PC-3 (cell line): ENCODE measurements at regions of chrX and their contacts with region 1.

Region 1: DNA sequence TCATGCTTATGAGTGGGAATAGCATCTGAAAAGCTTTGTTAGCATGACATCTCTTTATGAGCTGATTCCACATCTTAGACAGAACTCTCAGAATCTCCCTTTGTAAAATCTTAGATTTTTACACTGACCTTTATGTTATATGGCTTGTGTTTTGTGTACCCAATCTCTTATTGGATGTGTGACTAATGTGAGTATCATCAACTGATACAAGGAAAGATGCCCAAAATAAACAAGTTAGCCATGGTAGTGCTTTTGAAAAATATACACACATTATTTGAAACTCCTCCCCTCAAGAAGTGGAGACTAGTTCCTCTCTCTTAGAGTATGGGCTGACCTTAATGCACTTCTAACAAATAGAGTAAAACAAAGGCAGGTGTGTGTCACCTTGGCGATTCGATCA is 160.1 kb upstream of the NRK start:
- DNase-seq: peak; percentile 75
- ATAC-seq: peak; percentile 94
- H3K4me3 ChIP-seq: no peak overlapping the region; the same call in 1 of the 2 replicates
- H3K27ac ChIP-seq: peak overlapping the region; percentile 77
- H3K4me1 ChIP-seq: peaks cover 13% of the 10 kb centered on the region
- H3K27me3 ChIP-seq: no peaks in the 10 kb centered on the region
- CTCF ChIP-seq: no peak

Region 2: DNA sequence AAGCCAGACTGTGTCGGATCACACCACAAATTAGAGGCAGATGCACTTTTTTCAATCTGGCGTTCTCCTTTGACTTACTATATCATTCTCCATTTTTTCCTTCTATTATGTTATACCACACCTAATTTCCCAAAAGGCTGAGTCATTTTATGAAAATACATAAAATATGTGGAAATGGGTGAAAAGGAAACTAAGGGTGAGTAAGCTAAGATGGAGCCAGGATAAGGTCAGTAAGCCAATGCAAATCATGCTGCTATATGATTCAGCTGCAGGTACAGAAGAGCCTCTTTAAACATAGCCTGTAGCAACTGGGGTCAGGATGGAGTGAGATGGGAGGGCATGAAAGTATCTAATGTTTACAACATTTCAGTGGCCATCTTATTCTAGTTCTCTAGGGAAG is 347.8 kb before region 1 on chrX:
- CTCF ChIA-PET with region 1: no interaction called
- POLR2A ChIA-PET with region 1: no interaction called
- intact Hi-C with region 1: loop called (anchors 1 kb)
- DNase-seq: peak; percentile 91
- ATAC-seq: peak; percentile 92
- H3K4me3 ChIP-seq: peak overlapping the region; percentile 61
- H3K27ac ChIP-seq: peak overlapping the region; percentile 95
- H3K4me1 ChIP-seq: peaks cover 36% of the 10 kb centered on the region
- H3K27me3 ChIP-seq: no peaks in the 10 kb centered on the region
- CTCF ChIP-seq: no peak

Region 3: DNA sequence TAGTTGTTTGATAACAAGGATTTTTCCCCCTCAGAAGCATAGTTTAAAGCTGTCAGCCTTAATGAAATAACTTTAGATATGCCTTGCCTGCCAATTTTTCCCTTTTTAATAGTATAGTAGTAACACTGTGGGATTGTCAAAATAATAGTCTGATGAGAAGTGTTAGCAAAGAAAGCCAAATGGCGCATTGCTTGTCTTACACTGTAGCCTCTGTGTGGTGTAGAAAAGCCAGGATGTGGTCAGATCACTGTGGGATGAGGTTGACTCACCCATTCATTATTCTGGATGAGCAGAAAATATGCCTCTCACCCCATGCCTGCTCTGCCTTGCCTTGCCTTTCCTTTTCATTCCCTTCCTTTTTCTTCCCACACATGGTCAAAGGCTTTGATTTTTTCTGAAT is 97.7 kb before region 1 on chrX:
- CTCF ChIA-PET with region 1: no interaction called
- POLR2A ChIA-PET with region 1: no interaction called
- intact Hi-C with region 1: loop called (anchors 10 kb)
- DNase-seq: peak; percentile 84
- ATAC-seq: peak; percentile 99
- H3K4me3 ChIP-seq: no peak overlapping the region
- H3K27ac ChIP-seq: peak overlapping the region; percentile 77
- H3K4me1 ChIP-seq: peaks cover 15% of the 10 kb centered on the region
- H3K27me3 ChIP-seq: no peaks in the 10 kb centered on the region
- CTCF ChIP-seq: no peak

Region 4: DNA sequence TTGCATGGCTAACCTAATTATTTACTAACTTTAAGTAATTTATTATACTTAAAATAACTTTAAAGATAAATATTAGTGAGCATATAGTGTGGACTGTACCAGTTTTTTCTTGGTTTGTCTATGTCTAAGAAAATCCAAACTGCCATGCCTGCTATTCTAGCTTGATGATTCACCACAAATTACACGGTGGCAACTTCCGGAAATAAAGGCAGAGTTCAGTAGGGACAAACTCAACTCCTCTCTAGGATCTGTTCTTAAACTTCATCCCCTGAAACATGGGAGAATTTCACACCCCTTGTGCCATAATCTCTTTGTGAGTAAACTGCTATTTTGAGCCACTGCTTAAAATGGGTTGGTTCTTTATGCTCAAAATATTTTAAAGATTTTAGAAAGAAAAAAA is 53.5 kb before region 1 on chrX:
- CTCF ChIA-PET with region 1: no interaction called
- POLR2A ChIA-PET with region 1: no interaction called
- intact Hi-C with region 1: loop called (anchors 1 kb)
- DNase-seq: peak; percentile 48
- ATAC-seq: no peak
- H3K4me3 ChIP-seq: no peak overlapping the region
- H3K27ac ChIP-seq: no peak overlapping the region
- H3K4me1 ChIP-seq: peaks cover 23% of the 10 kb centered on the region
- H3K27me3 ChIP-seq: no peaks in the 10 kb centered on the region
- CTCF ChIP-seq: no peak

Region 5: DNA sequence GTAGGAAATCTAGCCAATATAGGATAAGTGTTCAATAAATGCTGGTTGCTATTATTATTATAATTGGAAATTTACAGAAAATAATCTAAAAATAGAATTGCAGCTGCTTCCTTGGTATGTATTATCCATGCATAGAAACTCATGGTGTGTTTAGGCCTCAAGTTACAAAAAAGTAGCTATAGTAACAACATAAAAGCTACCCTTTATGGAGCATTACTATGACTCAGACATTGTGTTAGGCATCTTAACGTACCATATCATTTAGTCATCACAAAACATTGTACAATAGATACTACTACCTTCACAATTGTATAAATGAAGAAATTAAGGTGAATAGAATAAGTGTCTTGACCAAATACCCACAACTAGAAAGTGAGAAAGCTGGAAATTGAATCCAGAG is 33.2 kb after region 1 on chrX:
- CTCF ChIA-PET with region 1: interaction called, 4 read pairs
- POLR2A ChIA-PET with region 1: no interaction called
- intact Hi-C with region 1: loop called (anchors 1 kb)
- DNase-seq: peak; percentile 84
- ATAC-seq: peak; percentile 96
- H3K4me3 ChIP-seq: no peak overlapping the region
- H3K27ac ChIP-seq: peak overlapping the region; percentile 75
- H3K4me1 ChIP-seq: peaks cover 27% of the 10 kb centered on the region
- H3K27me3 ChIP-seq: no peaks in the 10 kb centered on the region
- CTCF ChIP-seq: no peak

Region 6: GRCh38 chrX:105837232-105837631 is 175.0 kb after region 1 on chrX:
- CTCF ChIA-PET with region 1: no interaction called
- POLR2A ChIA-PET with region 1: no interaction called
- intact Hi-C with region 1: no loop called
- DNase-seq: peak; percentile 90
- ATAC-seq: peak; percentile 97
- H3K4me3 ChIP-seq: no peak overlapping the region
- H3K27ac ChIP-seq: no peak overlapping the region
- H3K4me1 ChIP-seq: peaks cover 12% of the 10 kb centered on the region
- H3K27me3 ChIP-seq: no peaks in the 10 kb centered on the region
- CTCF ChIP-seq: no peak